ENCODE measurements at regions of chr14 and their contacts with region 1.

Region 1: DNA sequence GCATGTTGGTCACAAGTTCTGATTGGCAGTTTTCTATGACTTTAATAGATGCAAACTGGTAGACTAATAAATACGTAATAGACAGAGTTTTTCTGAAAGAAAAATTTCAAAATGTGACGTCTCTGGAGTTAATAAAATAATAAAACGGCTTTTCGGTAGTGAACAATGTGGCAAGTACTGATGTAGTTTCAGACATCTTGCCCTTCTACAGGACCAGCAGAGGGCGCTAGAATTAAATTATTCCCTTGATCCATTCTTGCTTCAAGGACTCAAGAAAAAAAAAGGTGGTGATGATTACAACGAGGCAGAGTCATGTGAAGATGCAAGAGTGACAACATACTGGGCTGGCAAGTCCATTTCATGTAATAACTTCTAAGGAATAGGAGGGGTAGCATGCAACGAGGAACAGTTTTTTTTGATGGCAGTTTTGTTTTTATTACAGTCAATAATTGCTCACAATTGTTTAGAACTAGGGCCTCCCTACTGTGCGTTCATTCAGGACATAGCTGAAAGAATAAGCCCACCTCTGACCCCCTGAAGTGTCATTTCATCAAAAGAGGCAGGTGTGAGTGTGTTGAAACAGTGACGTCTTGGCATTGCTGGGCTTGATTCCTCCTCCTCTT is 101.0 kb upstream of the GZMB start:
- DNase-seq: peak; percentile 54
- H3K4me3 ChIP-seq: no peak overlapping the region
- H3K27ac ChIP-seq: no peak overlapping the region
- H3K4me1 ChIP-seq: no peaks in the 10 kb centered on the region
- H3K27me3 ChIP-seq: no peaks in the 10 kb centered on the region
- CTCF ChIP-seq: peak; percentile 51 to 57
- POLR2A ChIP-seq: no peak

Region 2: GRCh38 chr14:24801024-24801423 is 66.0 kb after region 1 on chr14:
- CTCF ChIA-PET with region 1: interaction called, 14 read pairs
- POLR2A ChIA-PET with region 1: no interaction called
- dilution Hi-C with region 1: no loop called
- intact Hi-C with region 1: loop called (anchors 1 kb)
- DNase-seq: no peak
- H3K4me3 ChIP-seq: no peak overlapping the region
- H3K27ac ChIP-seq: no peak overlapping the region
- H3K4me1 ChIP-seq: no peaks in the 10 kb centered on the region
- H3K27me3 ChIP-seq: no peaks in the 10 kb centered on the region
- CTCF ChIP-seq: no peak
- POLR2A ChIP-seq: no peak

Region 3: GRCh38 chr14:25042362-25043299 is 307.6 kb after region 1 on chr14:
- CTCF ChIA-PET with region 1: no interaction called
- POLR2A ChIA-PET with region 1: no interaction called
- dilution Hi-C with region 1: no loop called
- intact Hi-C with region 1: loop called (anchors 2 kb)
- DNase-seq: peak; percentile 8
- H3K4me3 ChIP-seq: no peak overlapping the region
- H3K27ac ChIP-seq: no peak overlapping the region
- H3K4me1 ChIP-seq: no peaks in the 10 kb centered on the region
- H3K27me3 ChIP-seq: peaks cover under 1 to 5% of the 10 kb centered on the region in 2 experiments
- CTCF ChIP-seq: peak in 1 of 2 donors; percentile 27
- POLR2A ChIP-seq: no peak

Region 4: DNA sequence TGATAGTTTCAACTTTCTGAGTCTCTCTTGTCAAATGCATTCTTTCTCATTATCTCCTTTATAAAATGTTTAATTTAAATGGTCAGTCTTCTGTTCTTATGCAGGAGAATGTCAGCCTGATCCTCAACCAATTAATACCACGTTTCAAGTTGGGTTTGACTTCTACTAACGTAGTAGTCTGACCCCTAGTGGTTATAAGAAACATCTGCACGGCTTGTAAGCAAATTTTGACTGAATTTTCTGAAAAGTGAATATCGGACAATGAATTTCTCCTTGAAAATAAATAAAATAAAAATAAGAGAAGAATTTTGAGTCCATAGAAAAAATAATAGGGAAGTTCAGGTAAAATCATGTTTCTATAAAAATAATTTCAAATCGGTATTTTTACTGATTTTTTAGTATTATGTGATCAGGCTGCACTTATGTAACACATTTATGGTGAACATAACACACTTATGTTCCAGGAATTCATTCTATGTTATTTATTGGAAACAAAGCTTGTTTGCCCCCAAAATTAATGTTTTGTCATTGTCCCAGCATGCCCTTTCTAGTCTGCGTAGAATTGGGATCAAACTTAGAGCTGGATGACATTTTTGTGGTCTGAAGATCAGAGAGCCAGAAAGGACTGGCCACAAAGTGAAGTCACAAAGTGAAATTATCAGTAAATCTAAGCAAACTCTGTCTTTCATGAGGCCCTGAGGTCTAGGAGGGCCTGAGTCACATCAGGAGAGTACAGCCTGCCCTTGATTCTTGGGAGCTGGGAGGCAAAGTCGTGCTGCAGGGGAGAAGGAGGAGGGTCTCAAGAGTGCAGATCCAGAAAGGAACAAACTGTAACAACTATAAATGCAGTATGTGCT is 416.2 kb after region 1 on chr14:
- CTCF ChIA-PET with region 1: interaction called, 5 read pairs
- POLR2A ChIA-PET with region 1: no interaction called
- dilution Hi-C with region 1: no loop called
- intact Hi-C with region 1: loop called (anchors 1 kb)
- DNase-seq: peak; percentile 43
- H3K4me3 ChIP-seq: no peak overlapping the region
- H3K27ac ChIP-seq: no peak overlapping the region
- H3K4me1 ChIP-seq: no peaks in the 10 kb centered on the region
- H3K27me3 ChIP-seq: no peaks in the 10 kb centered on the region
- CTCF ChIP-seq: peak; percentile 42 to 49
- POLR2A ChIP-seq: no peak

Measured in endothelial cell of umbilical vein (primary cell).